ENCODE measurements at regions of chr12 and their contacts with region 1.

Region 1: DNA sequence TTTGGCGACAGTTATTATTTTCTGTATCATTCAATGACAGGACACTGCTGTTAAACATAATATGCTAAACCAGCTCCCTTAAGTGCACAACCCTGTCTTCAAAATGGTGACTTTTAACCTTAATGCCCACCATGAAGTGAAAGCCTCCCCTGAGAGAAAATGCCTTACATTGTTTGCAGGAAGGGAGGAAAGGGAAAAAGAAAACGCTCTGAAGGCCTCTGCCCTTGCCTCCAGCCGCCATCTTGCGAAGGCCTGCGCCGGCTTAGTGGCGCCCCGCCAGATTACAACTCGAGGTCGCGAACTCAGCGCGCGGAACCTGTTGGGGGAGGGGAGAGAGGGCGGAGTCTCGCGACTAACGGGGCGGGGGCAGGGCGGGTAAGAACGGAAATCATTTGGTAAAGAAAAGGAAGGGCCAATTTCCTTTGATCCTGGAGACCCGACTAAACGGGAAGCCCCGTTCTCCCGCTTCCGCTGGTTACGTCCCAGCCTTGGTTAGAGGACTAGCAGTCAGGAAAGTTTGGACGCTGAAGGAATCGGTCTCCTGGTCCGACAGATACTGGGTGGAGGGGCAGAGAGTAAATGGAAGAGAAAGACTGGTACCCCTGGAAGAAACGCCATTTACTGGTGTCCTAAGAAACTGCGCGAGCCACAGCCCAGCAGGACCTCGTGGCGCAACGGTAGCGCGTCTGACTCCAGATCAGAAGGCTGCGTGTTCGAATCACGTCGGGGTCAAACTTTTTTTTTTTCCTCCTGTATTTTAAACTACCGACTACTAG is 11.6 kb upstream of the TMPO start:
- DNase-seq: peak; percentile 88
- ATAC-seq: peak; percentile 88
- H3K4me3 Mint-ChIP-seq: peak overlapping the region; percentile 99
- H3K27ac Mint-ChIP-seq: peak overlapping the region; percentile 99
- H3K4me1 Mint-ChIP-seq: peaks cover 23% of the 10 kb centered on the region
- H3K27me3 Mint-ChIP-seq: peaks cover 5% of the 10 kb centered on the region
- CTCF ChIP-seq: no peak

Region 2: DNA sequence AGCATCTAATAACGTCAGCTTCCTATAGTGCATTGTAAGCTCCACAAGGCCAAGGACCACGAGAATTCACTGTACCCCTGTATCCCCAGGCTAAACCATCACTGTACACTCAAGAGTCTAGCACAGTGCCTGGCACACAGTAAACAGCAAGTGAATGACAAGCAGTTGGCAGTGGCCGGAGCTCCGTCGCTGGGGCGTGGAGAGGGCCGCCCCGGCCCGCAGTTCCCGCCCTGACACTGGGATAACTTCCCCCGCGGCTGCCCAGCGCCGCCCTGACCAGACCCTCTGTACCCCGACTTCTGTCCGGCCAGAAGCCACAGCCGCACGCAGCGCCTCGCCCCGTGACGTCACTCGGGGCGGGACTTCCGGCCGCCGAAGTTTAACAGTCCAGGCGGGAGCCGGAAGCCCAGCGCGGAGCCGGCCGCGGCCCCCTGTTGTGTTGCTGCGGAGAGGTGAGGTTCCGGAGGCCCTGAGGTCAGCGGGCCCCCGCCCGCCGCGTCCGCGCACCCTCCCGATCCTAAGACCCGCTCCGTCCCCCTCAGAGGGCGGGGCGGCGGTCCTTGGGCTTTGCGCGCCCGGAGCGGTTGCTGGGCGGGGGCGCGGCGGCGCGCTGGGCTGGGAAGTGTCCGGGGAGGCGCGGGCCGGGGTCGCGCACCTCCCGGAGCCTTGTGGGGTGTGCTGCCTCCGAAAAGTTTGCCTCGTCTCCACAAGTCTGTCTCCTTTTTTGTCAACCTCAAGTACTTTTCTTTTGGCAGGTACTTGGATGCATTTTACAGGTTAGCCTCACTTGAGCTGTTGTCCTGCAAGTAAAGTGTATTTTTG is 1596.7 kb before region 1 on chr12 and contains the start of gene NEDD1:
- CTCF ChIA-PET with region 1: no interaction called
- POLR2A ChIA-PET with region 1: no interaction called
- intact Hi-C with region 1: loop called (anchors 2 kb)
- DNase-seq: peak; percentile 85
- ATAC-seq: peak; percentile 85
- H3K4me3 Mint-ChIP-seq: peak within 1 kb of the TSS; percentile 95
- H3K27ac Mint-ChIP-seq: peak within 1 kb of the TSS; percentile 91
- H3K4me1 Mint-ChIP-seq: peaks cover 41% of the 10 kb centered on the region
- H3K27me3 Mint-ChIP-seq: peaks cover 2% of the 10 kb centered on the region
- CTCF ChIP-seq: no peak
- total RNA-seq, gene NEDD1: 15.0 and 16.3 TPM in 2 replicates

Region 3: DNA sequence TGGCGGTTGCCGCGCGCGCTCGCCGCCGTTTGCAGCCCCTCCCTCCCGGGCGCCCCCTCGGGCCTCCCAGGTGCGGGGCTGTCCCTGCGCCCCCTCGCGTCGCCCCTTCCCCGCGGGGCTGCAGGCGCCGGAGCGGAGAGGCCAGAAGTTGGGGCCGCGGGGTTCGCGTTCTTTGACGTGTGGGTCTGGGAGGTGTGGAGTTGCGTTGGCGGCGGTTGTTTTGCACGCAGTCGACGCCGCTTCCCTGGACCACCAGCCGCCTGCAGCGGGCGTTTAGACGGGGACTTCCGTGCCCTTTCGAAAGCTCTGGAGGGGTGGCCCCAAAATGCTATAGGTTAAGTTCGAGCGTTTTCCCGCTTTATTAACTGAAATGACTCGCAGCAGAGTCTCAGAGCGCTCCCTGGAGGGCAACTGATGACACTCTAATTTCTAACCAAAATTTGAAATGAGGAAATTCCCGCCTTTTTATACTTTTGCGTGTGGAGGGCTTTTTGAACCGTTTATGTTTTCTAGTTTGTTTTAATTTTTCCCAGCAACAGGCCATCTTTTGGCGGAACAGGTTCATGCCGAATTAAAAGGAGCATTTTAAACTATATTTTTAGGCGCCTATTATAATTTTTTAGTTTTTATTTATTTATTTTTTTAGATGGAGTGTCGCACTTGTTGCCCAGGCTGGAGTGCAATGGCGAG is 12.5 kb after region 1 on chr12:
- CTCF ChIA-PET with region 1: interaction called, 5 read pairs
- POLR2A ChIA-PET with region 1: interaction called, 71 read pairs
- intact Hi-C with region 1: loop called (anchors 1 kb)
- DNase-seq: peak; percentile 71
- ATAC-seq: peak; percentile 63
- H3K4me3 Mint-ChIP-seq: peak overlapping the region; percentile 98
- H3K27ac Mint-ChIP-seq: peak overlapping the region; percentile 97
- H3K4me1 Mint-ChIP-seq: peaks cover 61% of the 10 kb centered on the region
- H3K27me3 Mint-ChIP-seq: no peaks in the 10 kb centered on the region
- CTCF ChIP-seq: no peak

Region 4: DNA sequence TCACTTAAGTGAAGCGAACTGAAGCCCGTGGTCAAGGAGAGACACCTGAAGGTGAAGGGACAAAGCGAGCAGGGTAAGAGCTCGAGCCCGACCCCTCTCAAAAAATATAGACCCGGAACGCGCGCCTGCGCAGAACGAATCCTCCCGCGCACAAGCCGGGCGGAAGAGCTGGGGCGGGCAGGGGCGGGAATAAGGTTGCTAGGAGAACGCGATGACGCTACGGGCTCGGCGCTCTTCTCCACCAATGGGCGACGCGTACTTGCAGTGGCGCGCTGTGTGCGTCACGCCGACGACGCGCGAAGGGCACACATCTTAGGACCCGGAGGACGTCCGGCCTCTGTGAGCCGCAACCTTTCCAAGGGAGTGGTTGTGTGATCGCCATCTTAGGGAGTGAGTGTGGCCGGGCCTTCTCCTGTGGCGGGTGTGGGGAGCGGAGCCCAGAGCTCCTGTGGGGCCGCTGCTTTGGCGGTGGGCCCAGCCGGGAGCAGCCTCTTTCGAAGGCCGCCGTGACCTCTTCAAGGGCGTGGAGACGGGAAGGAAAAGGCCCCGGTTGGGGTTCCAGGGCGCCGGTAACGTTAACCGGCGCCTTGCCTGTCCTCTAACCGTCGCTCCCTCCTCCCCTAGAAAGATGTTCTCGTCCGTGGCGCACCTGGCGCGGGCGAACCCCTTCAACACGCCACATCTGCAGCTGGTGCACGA is 89.7 kb after region 1 on chr12 and contains the start of gene SLC25A3:
- CTCF ChIA-PET with region 1: no interaction called
- POLR2A ChIA-PET with region 1: interaction called, 8 read pairs
- intact Hi-C with region 1: loop called (anchors 1 kb)
- DNase-seq: peak; percentile 81
- ATAC-seq: peak; percentile 97
- H3K4me3 Mint-ChIP-seq: peak within 1 kb of the TSS; percentile 96
- H3K27ac Mint-ChIP-seq: peak within 1 kb of the TSS; percentile 96
- H3K4me1 Mint-ChIP-seq: peaks cover 36% of the 10 kb centered on the region
- H3K27me3 Mint-ChIP-seq: no peaks in the 10 kb centered on the region
- CTCF ChIP-seq: no peak
- total RNA-seq, gene SLC25A3: 508 and 518 TPM in 2 replicates

Region 5: DNA sequence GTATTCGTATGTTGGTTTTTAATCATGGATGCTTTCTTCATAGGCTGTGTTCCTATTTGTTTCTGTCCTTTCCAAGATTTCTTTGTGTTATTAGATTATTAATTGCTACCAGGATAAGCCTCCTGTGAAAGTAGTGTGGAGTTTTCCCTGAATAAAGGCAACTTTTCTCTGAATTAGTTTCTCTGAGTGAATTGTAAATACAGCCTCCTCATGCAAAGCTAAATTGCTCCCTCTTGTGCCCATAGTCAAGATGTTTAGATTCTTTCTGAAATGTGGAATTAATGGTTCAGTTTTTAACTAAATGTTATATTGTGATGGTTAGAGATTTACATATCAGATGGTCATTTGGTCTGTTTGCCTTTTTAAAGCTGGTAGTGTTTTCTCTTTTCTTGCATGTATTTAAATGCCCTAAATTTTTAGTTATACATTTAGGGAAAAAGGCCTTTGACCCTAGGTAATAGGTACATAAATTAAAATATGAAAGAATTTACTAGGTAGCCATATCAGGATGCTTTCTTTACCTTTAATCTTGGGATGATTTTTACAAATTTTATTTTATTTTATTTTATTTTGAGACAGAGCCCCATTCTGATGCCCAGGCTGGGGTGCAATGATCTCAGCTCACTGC is 150.2 kb after region 1 on chr12:
- CTCF ChIA-PET with region 1: no interaction called
- POLR2A ChIA-PET with region 1: no interaction called
- intact Hi-C with region 1: no loop called
- DNase-seq: no peak
- ATAC-seq: peak; percentile 56
- H3K4me3 Mint-ChIP-seq: no peak overlapping the region
- H3K27ac Mint-ChIP-seq: no peak overlapping the region
- H3K4me1 Mint-ChIP-seq: no peaks in the 10 kb centered on the region
- H3K27me3 Mint-ChIP-seq: no peaks in the 10 kb centered on the region
- CTCF ChIP-seq: peak; percentile 21

Region 6: DNA sequence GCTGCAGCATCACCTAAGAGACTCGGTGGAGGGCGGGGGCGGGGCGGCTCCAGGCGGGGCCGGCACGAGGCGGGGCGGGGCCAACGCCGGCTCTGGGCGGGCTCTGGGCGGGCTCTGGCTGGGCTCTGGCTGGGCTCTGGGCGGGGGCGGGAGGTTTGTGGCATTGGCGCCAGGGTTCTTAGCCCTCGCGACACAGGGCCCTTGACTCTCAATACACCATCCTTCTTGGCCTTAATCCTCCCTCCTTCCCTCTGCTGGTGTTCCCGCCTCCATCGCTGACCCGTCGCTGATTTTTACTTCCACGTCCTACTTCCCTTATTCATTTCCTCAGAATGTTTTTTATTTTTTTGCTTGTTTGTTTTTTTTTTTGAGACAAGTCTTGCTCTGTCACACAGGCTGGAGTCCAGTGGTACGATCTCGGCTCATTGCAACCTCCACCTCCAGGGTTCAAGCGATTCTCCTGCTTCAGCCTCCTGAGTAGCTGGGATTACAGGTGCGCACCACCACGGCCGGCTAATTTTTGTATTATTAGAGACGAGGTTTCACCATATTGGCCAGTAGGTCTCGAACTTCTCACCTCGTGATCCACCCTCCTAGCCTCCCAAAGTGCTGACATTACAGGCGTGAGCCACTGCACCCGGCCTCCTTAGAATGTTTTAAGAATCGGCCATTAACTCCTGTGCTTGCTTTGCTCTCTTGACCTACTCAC is 1639.2 kb after region 1 on chr12 and contains the start of gene BLTP3B:
- CTCF ChIA-PET with region 1: no interaction called
- POLR2A ChIA-PET with region 1: no interaction called
- intact Hi-C with region 1: loop called (anchors 10 kb)
- DNase-seq: peak; percentile 85
- ATAC-seq: peak; percentile 93
- H3K4me3 Mint-ChIP-seq: peak within 1 kb of the TSS; percentile 92
- H3K27ac Mint-ChIP-seq: peak within 1 kb of the TSS; percentile 93
- H3K4me1 Mint-ChIP-seq: peaks cover 41% of the 10 kb centered on the region
- H3K27me3 Mint-ChIP-seq: no peaks in the 10 kb centered on the region
- CTCF ChIP-seq: no peak
- total RNA-seq, gene BLTP3B: 22.3 and 22.5 TPM in 2 replicates